A673 (cell line): ENCODE measurements at regions of chr13 and their contacts with region 1.

Region 1: GRCh38 chr13:46576762-46577161 is 23.8 kb downstream of the LRCH1 start:
- DNase-seq: no peak
- H3K4me3 ChIP-seq: no peak overlapping the region
- H3K27ac ChIP-seq: no peak overlapping the region
- H3K4me1 ChIP-seq: peaks cover 47% of the 10 kb centered on the region
- H3K27me3 ChIP-seq: no peaks in the 10 kb centered on the region
- CTCF ChIP-seq: no peak

Region 2: DNA sequence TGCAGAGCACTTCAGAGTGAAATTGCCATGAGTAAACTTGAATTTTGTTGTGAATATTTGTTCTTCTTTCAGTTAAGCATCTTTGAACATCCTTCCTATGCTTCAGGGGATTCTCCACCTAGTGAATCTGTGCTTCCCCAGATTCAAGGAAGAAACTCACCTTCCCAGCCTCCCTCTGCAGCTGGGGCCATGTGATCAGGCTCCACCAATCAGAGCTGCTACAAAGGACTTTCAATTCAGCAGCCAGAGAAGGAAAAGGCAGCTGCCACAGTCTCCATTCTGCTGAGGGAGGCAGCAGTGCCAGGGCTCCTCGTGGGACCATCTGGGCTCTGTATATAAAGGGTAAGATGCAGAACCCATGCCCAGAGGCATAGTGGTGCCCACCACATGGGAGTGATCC is 635.5 kb before region 1 on chr13:
- CTCF ChIA-PET with region 1: no interaction called
- POLR2A ChIA-PET with region 1: no interaction called
- intact Hi-C with region 1: no loop called
- DNase-seq: no peak
- H3K4me3 ChIP-seq: no peak overlapping the region
- H3K27ac ChIP-seq: no peak overlapping the region
- H3K4me1 ChIP-seq: peaks cover 19% of the 10 kb centered on the region
- H3K27me3 ChIP-seq: no peaks in the 10 kb centered on the region
- CTCF ChIP-seq: no peak

Region 3: GRCh38 chr13:46648166-46648635 is 71.4 kb after region 1 on chr13:
- CTCF ChIA-PET with region 1: no interaction called
- POLR2A ChIA-PET with region 1: no interaction called
- intact Hi-C with region 1: no loop called
- DNase-seq: peak; percentile 74
- H3K4me3 ChIP-seq: no peak overlapping the region
- H3K27ac ChIP-seq: no peak overlapping the region
- H3K4me1 ChIP-seq: peaks cover 36% of the 10 kb centered on the region
- H3K27me3 ChIP-seq: no peaks in the 10 kb centered on the region
- CTCF ChIP-seq: no peak

Region 4: GRCh38 chr13:46735425-46735824 is 158.7 kb after region 1 on chr13:
- CTCF ChIA-PET with region 1: no interaction called
- POLR2A ChIA-PET with region 1: interaction called, 15 read pairs
- intact Hi-C with region 1: no loop called
- DNase-seq: no peak
- H3K4me3 ChIP-seq: no peak overlapping the region
- H3K27ac ChIP-seq: no peak overlapping the region
- H3K4me1 ChIP-seq: no peaks in the 10 kb centered on the region
- H3K27me3 ChIP-seq: no peaks in the 10 kb centered on the region
- CTCF ChIP-seq: no peak

Region 5: DNA sequence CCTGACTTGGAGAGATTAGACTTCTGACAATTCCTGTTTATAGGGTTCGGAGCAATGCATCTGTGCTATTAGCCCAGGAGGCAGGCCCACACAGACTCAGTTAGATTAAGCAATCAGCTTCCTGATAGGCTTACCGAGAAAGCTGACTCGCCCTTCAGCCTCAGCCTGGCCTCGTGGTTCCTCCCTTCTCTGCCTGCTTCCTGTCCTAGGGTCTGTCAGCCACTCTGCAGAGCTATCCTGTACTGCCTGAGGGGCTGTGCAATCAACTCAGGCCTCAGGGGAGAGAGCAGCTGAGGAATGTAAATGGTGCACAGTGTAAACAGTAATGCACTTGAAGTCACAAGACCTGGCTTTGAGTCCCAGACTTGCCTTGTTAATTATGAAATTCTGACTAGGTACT is 289.4 kb after region 1 on chr13:
- CTCF ChIA-PET with region 1: no interaction called
- POLR2A ChIA-PET with region 1: no interaction called
- intact Hi-C with region 1: no loop called
- DNase-seq: peak; percentile 61
- H3K4me3 ChIP-seq: no peak overlapping the region
- H3K27ac ChIP-seq: no peak overlapping the region
- H3K4me1 ChIP-seq: no peaks in the 10 kb centered on the region
- H3K27me3 ChIP-seq: peaks cover 34% of the 10 kb centered on the region
- CTCF ChIP-seq: no peak